ENCODE measurements at regions of chr5 and their contacts with region 1.

Region 1: DNA sequence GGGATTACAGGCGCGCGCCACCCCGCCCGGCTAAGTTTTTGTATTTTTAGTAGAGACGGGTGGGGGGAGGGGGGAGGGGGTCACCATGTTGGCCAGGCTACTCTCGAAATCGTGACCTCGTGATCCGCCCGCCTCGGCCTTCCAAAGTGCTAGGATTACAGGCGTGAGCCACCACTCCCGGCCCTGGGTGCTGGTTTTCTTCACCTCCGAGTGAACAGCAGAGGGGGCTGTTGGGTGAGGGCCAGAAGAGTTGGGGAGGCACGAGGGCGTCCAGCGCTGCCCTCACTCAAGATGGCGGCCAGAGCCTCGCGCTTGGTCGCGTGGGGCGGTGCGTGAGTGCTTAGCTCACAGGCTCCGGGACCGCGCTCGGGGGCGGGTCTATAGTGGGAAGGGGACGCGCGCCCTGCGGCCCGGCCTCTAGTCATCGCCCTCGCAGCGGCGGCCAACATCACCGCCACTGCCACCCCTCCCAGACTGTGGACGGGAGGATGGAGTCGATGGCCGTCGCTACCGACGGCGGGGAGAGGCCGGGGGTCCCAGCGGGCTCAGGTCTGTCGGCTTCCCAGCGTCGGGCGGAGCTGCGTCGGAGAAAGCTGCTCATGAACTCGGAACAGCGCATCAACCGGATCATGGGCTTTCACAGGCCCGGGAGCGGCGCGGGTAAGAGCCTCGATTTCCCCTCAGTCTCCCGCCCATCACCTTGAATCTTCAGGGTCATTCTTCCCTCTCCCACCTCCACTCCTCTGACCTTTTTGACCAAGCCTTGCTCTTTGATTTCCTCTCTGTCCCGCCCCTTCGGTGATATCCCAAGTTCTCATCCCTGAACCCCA is at the start of gene CAMLG:
- DNase-seq: peak; percentile 95
- ATAC-seq: peak; percentile 93
- H3K4me3 ChIP-seq: peak within 1 kb of the TSS; percentile 94
- H3K27ac ChIP-seq: peak within 1 kb of the TSS; percentile 70
- H3K4me1 ChIP-seq: peaks cover 8% of the 10 kb centered on the region
- H3K27me3 ChIP-seq: no peaks in the 10 kb centered on the region
- CTCF ChIP-seq: peak; percentile 55; the same call in 1 of the 2 replicates
- total RNA-seq, gene CAMLG: 12.9 and 19.5 TPM in 2 replicates

Region 2: DNA sequence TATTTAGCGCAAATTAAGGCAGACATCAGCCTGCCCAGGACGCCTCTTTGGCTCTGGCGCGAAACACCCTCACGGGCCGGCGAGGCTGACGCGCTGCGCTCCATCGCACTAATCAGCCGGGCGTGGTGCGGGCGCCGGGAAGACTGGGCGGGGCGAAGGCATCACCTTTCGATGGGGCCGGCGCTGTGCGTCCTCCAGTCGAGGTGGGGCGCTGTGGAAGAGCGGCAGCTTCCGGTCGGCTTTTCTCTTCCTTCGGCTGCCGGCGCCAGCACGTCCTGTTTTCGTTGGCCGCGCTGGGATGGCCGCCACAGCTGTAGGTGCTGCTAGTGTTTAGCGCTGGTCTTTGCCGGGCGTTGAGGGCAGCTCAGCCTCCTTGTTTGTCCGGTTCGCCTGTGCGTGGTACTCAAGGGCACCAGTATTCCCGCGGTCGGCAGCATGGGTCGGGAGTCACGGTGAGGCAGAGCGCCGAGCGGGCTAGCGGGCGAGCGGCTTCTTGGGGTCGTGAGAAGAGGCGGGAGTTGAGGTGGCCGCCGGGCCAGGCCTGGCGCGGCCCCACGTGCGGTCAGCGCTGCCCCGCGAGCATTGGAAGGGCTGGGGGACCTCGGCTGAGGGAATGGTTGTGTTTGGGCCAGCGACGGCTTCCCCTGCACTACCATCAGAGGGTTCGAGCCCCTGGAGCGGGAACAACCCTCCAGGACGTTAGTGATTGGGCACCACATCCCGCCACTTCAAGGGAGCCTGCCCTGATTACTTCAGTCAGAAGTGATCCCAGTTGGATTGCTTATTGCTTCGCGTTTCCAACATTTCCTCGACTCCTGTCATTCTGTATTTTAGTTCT is 20.4 kb after region 1 on chr5 and contains the start of gene DDX46:
- CTCF ChIA-PET with region 1: no interaction called
- POLR2A ChIA-PET with region 1: interaction called, 3 read pairs
- intact Hi-C with region 1: loop called (anchors 2 kb)
- DNase-seq: peak; percentile 90
- ATAC-seq: peak; percentile 98
- H3K4me3 ChIP-seq: peak within 1 kb of the TSS; percentile 91
- H3K27ac ChIP-seq: peak within 1 kb of the TSS; percentile 25
- H3K4me1 ChIP-seq: peaks cover 16% of the 10 kb centered on the region
- H3K27me3 ChIP-seq: no peaks in the 10 kb centered on the region
- CTCF ChIP-seq: peak; percentile 70
- total RNA-seq, gene DDX46: 29.0 and 36.8 TPM in 2 replicates

Region 3: DNA sequence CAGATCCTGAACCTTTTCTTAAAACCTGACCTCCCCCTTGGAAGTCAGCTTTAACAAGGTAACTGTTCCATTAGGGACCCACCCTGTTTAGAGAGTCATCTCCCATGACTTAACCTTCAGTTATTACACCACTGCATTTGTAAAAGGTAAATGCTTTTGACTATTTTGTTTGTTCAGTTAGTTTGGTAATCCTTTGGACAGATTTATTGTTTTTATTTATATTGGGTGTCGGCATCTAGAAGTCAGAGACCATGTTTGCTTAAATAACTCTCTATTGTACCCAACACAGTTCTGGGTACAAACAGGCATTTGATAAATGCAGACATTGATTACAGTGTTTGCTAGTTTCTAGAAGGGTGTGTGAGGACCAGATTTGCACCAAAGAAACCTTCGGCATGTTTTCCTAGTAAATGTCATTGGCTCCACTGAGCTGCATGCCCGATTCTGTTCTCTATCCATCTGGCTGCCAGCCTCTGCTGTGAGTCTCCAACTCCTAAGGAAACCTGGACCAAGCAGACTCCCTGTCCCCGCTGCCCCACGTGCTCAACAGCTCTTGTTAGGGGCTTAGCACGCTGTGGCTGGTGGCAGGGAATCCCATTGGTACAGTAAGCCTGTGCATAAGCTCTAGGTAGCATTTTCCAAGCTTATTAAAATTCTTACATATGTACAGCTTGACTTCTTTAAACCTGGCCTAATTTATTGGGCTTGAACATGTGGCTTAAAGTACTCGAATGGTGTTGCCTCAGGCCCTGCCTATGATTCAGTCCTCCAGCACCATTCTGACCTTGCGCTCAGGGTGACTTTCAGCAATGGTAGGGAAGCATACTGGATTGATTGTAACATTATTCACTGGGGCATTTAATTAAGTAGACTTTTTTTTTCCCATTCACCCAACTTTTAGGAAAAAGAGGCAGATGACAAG is 173.2 kb after region 1 on chr5:
- CTCF ChIA-PET with region 1: no interaction called
- POLR2A ChIA-PET with region 1: no interaction called
- intact Hi-C with region 1: no loop called
- DNase-seq: no peak
- ATAC-seq: peak; percentile 35
- H3K4me3 ChIP-seq: no peak overlapping the region
- H3K27ac ChIP-seq: no peak overlapping the region
- H3K4me1 ChIP-seq: no peaks in the 10 kb centered on the region
- H3K27me3 ChIP-seq: no peaks in the 10 kb centered on the region
- CTCF ChIP-seq: no peak

Measured in PC-3 (cell line).